Naive thymus-derived CD4-positive, alpha-beta T cell (primary cell): ENCODE measurements at regions of chrX and their contacts with region 1.

Region 1: DNA sequence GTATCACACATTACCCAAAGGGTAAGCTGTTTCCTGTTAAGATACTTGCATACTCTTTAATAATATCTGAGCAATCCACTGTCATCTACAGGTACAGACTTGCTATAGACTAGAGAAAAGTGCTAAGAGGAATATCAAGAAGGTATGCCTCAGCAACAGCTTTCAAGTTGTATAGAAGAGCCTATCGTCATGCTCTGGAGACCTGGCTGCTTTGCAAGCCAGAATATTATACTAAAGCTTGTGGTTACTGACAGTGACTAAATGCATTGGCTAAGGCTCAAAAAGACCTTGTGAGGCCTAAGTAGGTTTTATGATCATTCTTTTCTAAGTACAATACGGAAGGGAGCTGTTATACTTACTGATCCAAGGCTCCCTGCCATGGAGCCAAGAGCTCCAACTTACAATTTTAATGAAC is 11.3 kb downstream of the LAMP2 start:
- DNase-seq: peak in 2 of 9 donors; percentile 23
- ATAC-seq: peak; percentile 73
- H3K4me3 ChIP-seq: no peak overlapping the region
- H3K4me3 Mint-ChIP-seq: peak overlapping the region in 9 of 10 donors; percentile 46 to 83 (median 71)
- H3K27ac ChIP-seq: peak overlapping the region; percentile 47
- H3K27ac Mint-ChIP-seq: peak overlapping the region; percentile 13 to 85 (median 70)
- H3K4me1 ChIP-seq: peaks cover 19 to 32% of the 10 kb centered on the region in 2 donors
- H3K4me1 Mint-ChIP-seq: peaks cover 21 to 75% (median 63%) of the 10 kb centered on the region in 7 donors
- H3K27me3 ChIP-seq: no peaks in the 10 kb centered on the region
- H3K27me3 Mint-ChIP-seq: no peaks in the 10 kb centered on the region

Region 2: DNA sequence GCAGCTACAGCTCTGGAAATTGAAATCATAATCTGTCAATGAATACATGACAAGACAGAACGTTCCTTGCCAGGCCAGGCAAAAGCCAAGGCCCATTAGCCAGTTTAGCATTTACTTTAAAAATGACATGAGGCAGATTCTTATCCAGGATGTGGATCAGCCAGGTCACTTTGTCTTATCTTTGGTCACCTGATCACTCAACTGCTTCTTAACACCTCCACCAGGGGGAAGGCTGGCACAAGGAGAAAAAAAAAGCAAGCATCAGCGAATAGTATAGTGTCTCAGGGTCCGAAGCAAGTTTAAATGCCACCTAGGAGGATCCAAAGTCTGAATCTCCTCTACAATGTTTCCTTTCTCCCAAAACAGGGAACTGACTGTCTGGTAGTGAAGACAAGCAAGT is 77.1 kb before region 1 on chrX:
- CTCF ChIA-PET with region 1: interaction called, 36 read pairs
- POLR2A ChIA-PET with region 1: no interaction called
- intact Hi-C with region 1: loop called in 1 of 2 experiments (anchors 1 kb)
- DNase-seq: peak in 7 of 9 donors; percentile 13 to 66 (median 54)
- ATAC-seq: peak; percentile 80
- H3K4me3 ChIP-seq: no peak overlapping the region
- H3K4me3 Mint-ChIP-seq: no peak overlapping the region
- H3K27ac ChIP-seq: no peak overlapping the region
- H3K27ac Mint-ChIP-seq: peak overlapping the region in 2 of 9 donors; percentile 23 to 57
- H3K4me1 ChIP-seq: peaks cover 0 to 4% of the 10 kb centered on the region in 2 donors
- H3K4me1 Mint-ChIP-seq: peaks cover 0 to 6% (median 4%) of the 10 kb centered on the region in 7 donors
- H3K27me3 ChIP-seq: no peaks in the 10 kb centered on the region
- H3K27me3 Mint-ChIP-seq: peaks cover 0 to 12% (median 4%) of the 10 kb centered on the region in 5 donors

Region 3: GRCh38 chrX:120419463-120419862 is 38.3 kb before region 1 on chrX:
- CTCF ChIA-PET with region 1: no interaction called
- POLR2A ChIA-PET with region 1: no interaction called
- intact Hi-C with region 1: loop called in 1 of 2 experiments (anchors 5 kb)
- DNase-seq: peak in 5 of 9 donors; percentile 19 to 33 (median 29)
- ATAC-seq: no peak
- H3K4me3 ChIP-seq: peak overlapping the region; percentile 31
- H3K4me3 Mint-ChIP-seq: peak overlapping the region in 7 of 10 donors; percentile 23 to 62 (median 43)
- H3K27ac ChIP-seq: peak overlapping the region; percentile 49
- H3K27ac Mint-ChIP-seq: peak overlapping the region; percentile 33 to 90 (median 78)
- H3K4me1 ChIP-seq: peaks cover 12 to 24% of the 10 kb centered on the region in 2 donors
- H3K4me1 Mint-ChIP-seq: peaks cover 4 to 25% (median 20%) of the 10 kb centered on the region in 7 donors
- H3K27me3 ChIP-seq: no peaks in the 10 kb centered on the region
- H3K27me3 Mint-ChIP-seq: no peaks in the 10 kb centered on the region

Region 4: DNA sequence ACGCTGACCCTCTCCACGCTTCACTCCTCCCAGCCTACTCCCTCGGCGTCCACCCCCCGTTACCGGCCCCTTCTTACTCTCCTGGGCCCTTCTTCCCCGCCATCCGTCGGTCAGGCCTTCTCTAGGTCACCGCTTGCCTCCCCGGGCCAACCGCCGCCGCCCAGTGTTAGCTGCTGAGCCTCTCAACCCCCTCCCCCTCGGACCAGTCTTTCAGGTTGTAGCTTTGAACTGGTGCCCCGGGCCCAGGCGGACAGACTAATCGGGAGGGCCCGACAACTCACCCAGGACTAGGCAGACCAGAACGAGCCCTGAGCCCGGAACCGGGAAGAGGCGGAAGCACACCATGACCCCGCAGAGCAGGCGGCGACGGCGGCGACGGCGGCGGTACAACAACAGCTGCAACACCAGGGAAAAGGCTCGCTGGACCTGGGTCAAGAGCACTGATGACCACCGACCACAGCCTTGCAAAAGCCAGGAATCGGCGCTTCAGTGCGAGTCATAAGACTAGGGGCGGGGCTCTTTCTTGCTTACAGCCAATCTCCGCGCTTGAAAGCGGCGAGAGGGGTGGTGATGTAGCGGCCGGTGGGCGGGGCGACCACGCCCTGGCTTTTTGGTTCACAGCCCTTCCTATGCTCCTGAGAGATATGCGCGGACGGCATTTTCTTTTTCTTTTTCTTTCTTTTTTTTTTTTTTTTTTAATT is 11.2 kb after region 1 on chrX and contains the start of gene LAMP2:
- CTCF ChIA-PET with region 1: no interaction called
- POLR2A ChIA-PET with region 1: interaction called, 13 read pairs
- intact Hi-C with region 1: loop called (anchors 1 to 2 kb)
- DNase-seq: peak; percentile 58 to 78 (median 72)
- ATAC-seq: peak; percentile 99
- H3K4me3 ChIP-seq: peak within 1 kb of the TSS; percentile 79
- H3K4me3 Mint-ChIP-seq: peak within 1 kb of the TSS; percentile 89 to 99 (median 94)
- H3K27ac ChIP-seq: peak within 1 kb of the TSS; percentile 80
- H3K27ac Mint-ChIP-seq: peak within 1 kb of the TSS; percentile 76 to 94 (median 92)
- H3K4me1 ChIP-seq: peaks cover 0 to 7% of the 10 kb centered on the region in 2 donors
- H3K4me1 Mint-ChIP-seq: peaks cover 5 to 40% (median 29%) of the 10 kb centered on the region in 7 donors
- H3K27me3 ChIP-seq: no peaks in the 10 kb centered on the region
- H3K27me3 Mint-ChIP-seq: no peaks in the 10 kb centered on the region
- total RNA-seq, gene LAMP2: 22.5 to 60.3 (median 44.9) TPM

Region 5: DNA sequence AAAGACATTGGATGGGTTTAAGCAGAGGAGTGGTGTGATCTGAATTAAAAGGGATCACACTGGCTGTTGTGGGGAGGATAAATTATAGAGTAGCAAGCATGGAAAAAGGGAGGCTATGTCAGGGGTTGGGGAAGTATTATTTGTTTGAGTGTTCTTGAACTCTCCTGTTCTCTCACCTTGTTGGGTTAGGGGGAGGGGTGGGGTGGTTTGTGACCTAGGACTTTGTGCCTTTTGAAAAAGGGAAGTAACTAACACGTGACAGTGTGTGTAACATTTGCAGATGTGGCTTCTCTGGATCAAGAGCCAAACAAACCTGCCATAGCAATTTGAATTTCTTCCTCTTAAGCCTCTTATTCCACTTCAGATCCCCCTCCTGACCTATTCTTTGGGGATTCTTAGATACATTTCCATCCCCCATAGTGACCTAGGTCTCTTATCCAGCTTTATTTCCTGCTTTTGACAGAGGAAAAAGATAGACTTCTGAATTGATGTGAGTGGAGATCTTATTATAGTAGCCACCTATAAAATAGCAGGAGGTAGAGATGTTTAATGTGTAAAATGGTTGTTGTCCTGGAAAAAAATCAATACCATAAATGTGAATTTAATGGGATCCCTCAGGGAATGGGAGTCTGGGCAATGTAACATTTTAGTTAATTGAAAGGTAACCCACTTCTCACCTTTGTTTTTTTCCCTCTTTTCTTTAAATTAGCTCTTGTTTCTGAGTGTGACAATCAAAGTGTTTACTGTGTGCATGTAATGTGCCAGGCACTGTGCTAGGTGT is 297.5 kb after region 1 on chrX:
- CTCF ChIA-PET with region 1: no interaction called
- POLR2A ChIA-PET with region 1: no interaction called
- intact Hi-C with region 1: no loop called
- DNase-seq: peak in 6 of 9 donors; percentile 20 to 61 (median 41)
- ATAC-seq: peak; percentile 60
- H3K4me3 ChIP-seq: no peak overlapping the region
- H3K4me3 Mint-ChIP-seq: peak overlapping the region in 9 of 10 donors; percentile 7 to 58 (median 52)
- H3K27ac ChIP-seq: no peak overlapping the region
- H3K27ac Mint-ChIP-seq: peak overlapping the region in 8 of 9 donors; percentile 28 to 80 (median 62)
- H3K4me1 ChIP-seq: peaks cover 0 to 39% of the 10 kb centered on the region in 2 donors
- H3K4me1 Mint-ChIP-seq: peaks cover 25 to 59% (median 52%) of the 10 kb centered on the region in 7 donors
- H3K27me3 ChIP-seq: no peaks in the 10 kb centered on the region
- H3K27me3 Mint-ChIP-seq: no peaks in the 10 kb centered on the region